Sigmoid colon (tissue), 7 donors: ENCODE measurements at regions of chr6 and their contacts with region 1.

Region 1: DNA sequence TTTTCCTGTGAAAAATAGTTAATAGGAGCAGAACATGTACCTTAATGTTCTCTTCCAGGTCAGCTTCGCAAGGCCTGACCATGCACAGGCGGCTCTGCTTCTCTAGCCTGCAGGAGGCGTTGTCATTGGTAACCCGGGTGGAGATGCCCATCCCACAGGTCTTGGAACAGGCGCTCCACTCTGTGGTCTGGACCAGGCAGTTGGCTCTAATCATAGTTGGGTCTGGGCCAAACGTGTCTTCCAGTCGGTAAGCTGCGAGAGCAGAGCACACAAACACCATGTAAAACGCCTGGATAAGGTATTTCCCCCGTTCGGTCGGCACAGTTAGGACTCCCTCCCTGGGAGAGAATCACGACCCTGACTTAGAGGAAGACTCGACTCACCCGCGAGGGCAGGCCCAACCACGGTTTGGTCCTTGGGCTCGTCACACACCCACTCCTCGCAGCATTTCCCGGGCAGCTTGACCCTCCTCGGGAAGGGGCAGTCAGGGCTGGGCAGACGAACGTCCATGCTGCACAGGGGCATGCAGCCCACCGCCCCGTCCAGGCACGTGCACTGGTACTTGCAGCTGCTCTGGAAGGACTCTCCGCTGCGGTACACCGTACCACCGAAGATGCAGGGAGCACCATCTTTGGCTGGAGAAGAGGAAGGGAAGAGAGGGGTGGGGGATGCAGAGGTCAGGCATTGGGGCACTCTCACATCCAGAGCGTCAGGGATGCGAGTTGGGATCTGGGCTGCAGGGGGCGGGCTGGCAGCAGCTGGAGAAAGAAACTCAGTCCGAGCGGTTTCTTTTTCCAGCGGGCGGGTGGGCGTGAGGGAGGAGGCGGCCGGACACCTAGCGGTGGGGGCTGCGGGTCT is 1.0 kb downstream of the CCN2 start:
- DNase-seq: peak; percentile 92
- H3K4me3 ChIP-seq: peak overlapping the region; percentile 54 to 93 (median 88)
- H3K27ac ChIP-seq: peak overlapping the region; percentile 94 to 98 (median 98)
- H3K4me1 ChIP-seq: peaks cover 0 to 54% (median 37%) of the 10 kb centered on the region in 4 donors
- H3K27me3 ChIP-seq: no peaks in the 10 kb centered on the region
- CTCF ChIP-seq: peak; percentile 62 to 71 (median 67)
- EP300 ChIP-seq: no peak
- POLR2A ChIP-seq: no peak

Region 2: GRCh38 chr6:132020138-132020581 is 70.0 kb after region 1 on chr6:
- intact Hi-C with region 1: loop called (anchors 5 kb)
- DNase-seq: peak; percentile 85
- H3K4me3 ChIP-seq: no peak overlapping the region
- H3K27ac ChIP-seq: peak overlapping the region; percentile 64 to 87 (median 78)
- H3K4me1 ChIP-seq: peaks cover 0 to 39% (median 29%) of the 10 kb centered on the region in 4 donors
- H3K27me3 ChIP-seq: no peaks in the 10 kb centered on the region
- CTCF ChIP-seq: no peak
- EP300 ChIP-seq: peak in 2 of 4 donors; percentile 14 to 49
- POLR2A ChIP-seq: no peak

Region 3: GRCh38 chr6:132063738-132064137 is 113.6 kb after region 1 on chr6:
- intact Hi-C with region 1: no loop called
- DNase-seq: no peak
- H3K4me3 ChIP-seq: no peak overlapping the region
- H3K27ac ChIP-seq: peak overlapping the region in 3 of 4 donors; percentile 27 to 42 (median 29)
- H3K4me1 ChIP-seq: peaks cover 0 to 39% (median 22%) of the 10 kb centered on the region in 4 donors
- H3K27me3 ChIP-seq: no peaks in the 10 kb centered on the region
- CTCF ChIP-seq: no peak
- EP300 ChIP-seq: no peak
- POLR2A ChIP-seq: no peak

Region 4: GRCh38 chr6:132084833-132085509 is 134.8 kb after region 1 on chr6:
- intact Hi-C with region 1: loop called (anchors 2 kb)
- DNase-seq: no peak
- H3K4me3 ChIP-seq: peak overlapping the region in 3 of 4 donors; percentile 6 to 16 (median 11)
- H3K27ac ChIP-seq: peak overlapping the region; percentile 73 to 83 (median 82)
- H3K4me1 ChIP-seq: peaks cover 0 to 26% (median 17%) of the 10 kb centered on the region in 4 donors
- H3K27me3 ChIP-seq: no peaks in the 10 kb centered on the region
- CTCF ChIP-seq: no peak
- EP300 ChIP-seq: no peak
- POLR2A ChIP-seq: no peak

Region 5: GRCh38 chr6:132131758-132132157 is 181.6 kb after region 1 on chr6:
- intact Hi-C with region 1: loop called (anchors 2 kb)
- DNase-seq: no peak
- H3K4me3 ChIP-seq: no peak overlapping the region
- H3K27ac ChIP-seq: peak overlapping the region; percentile 82 to 90 (median 89)
- H3K4me1 ChIP-seq: peaks cover 0 to 46% (median 39%) of the 10 kb centered on the region in 4 donors
- H3K27me3 ChIP-seq: no peaks in the 10 kb centered on the region
- CTCF ChIP-seq: no peak
- EP300 ChIP-seq: no peak
- POLR2A ChIP-seq: no peak

Region 6: GRCh38 chr6:132490024-132490423 is 539.9 kb after region 1 on chr6:
- intact Hi-C with region 1: loop called (anchors 10 kb)
- DNase-seq: peak; percentile 69
- H3K4me3 ChIP-seq: no peak overlapping the region
- H3K27ac ChIP-seq: peak overlapping the region in 3 of 4 donors; percentile 2 to 33 (median 27)
- H3K4me1 ChIP-seq: peaks cover 0 to 33% (median 23%) of the 10 kb centered on the region in 4 donors
- H3K27me3 ChIP-seq: no peaks in the 10 kb centered on the region
- CTCF ChIP-seq: no peak
- EP300 ChIP-seq: no peak
- POLR2A ChIP-seq: no peak